ENCODE measurements at regions of chr11 and their contacts with region 1.

Region 1: GRCh38 chr11:97140885-97141494 is 751.2 kb downstream of the JRKL start:
- DNase-seq: peak; percentile 16
- H3K4me3 ChIP-seq: no peak overlapping the region
- H3K27ac ChIP-seq: no peak overlapping the region
- H3K4me1 ChIP-seq: no peaks in the 10 kb centered on the region
- H3K27me3 ChIP-seq: peaks cover 3% of the 10 kb centered on the region
- CTCF ChIP-seq: peak; percentile 63 to 78

Region 2: GRCh38 chr11:96464700-96465307 is 676.2 kb before region 1 on chr11:
- CTCF ChIA-PET with region 1: interaction called, 27 read pairs
- dilution Hi-C with region 1: no loop called
- in situ Hi-C with region 1: loop called (anchors 10 kb)
- intact Hi-C with region 1: loop called (anchors 1 kb)
- DNase-seq: peak; percentile 54
- H3K4me3 ChIP-seq: no peak overlapping the region
- H3K27ac ChIP-seq: no peak overlapping the region
- H3K4me1 ChIP-seq: peaks cover 4% of the 10 kb centered on the region
- H3K27me3 ChIP-seq: peaks cover 3% of the 10 kb centered on the region
- CTCF ChIP-seq: peak; percentile 68 to 70

Region 3: GRCh38 chr11:96794152-96794551 is 346.8 kb before region 1 on chr11:
- CTCF ChIA-PET with region 1: no interaction called
- dilution Hi-C with region 1: no loop called
- in situ Hi-C with region 1: no loop called
- intact Hi-C with region 1: loop called (anchors 10 kb)
- DNase-seq: peak; percentile 3
- H3K4me3 ChIP-seq: no peak overlapping the region
- H3K27ac ChIP-seq: no peak overlapping the region
- H3K4me1 ChIP-seq: no peaks in the 10 kb centered on the region
- H3K27me3 ChIP-seq: peaks cover 2% of the 10 kb centered on the region
- CTCF ChIP-seq: peak; percentile 10 to 42

Region 4: DNA sequence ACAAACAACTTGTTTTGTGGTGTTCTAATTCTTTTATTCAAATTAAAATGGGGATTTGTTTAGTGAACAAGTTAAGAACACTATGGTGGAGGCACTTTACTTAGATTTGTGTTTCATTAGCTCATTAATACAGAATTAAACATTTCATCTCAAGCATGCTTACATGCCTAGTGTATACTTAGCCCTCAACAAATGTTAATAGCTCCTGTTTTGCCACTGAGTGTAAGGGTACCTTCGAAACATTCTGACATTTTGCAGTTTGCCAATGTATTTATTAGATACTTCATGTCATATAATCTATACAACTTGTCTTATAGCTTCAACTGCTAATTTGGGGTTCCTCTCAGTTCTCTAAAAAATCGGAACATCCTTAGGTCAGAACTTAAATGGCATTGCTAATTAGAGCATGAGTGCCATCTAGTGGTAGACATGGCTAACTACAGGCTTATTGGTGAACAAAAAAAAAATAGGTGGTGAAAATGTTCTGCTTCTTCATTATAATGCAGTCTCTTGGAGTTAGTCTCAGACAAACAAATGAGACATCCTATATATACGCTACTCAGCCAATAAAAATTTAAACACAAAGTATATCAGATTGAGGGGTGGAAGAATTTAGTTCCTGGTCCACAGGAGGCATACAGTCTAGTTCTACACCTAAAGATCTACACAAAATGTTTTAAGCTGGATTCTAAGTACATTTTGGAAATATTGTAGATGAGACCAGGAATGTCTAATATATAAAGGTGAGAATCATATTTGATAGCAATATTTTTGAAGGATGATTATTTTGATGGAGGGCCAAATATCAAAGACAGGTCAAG is 1874.9 kb after region 1 on chr11:
- CTCF ChIA-PET with region 1: no interaction called
- dilution Hi-C with region 1: no loop called
- in situ Hi-C with region 1: no loop called
- intact Hi-C with region 1: loop called (anchors 1 kb)
- DNase-seq: peak; percentile 14
- H3K4me3 ChIP-seq: no peak overlapping the region
- H3K27ac ChIP-seq: no peak overlapping the region
- H3K4me1 ChIP-seq: no peaks in the 10 kb centered on the region
- H3K27me3 ChIP-seq: peaks cover 3% of the 10 kb centered on the region
- CTCF ChIP-seq: peak; percentile 87 to 93